Head of caudate nucleus (tissue), 42 donors: ENCODE measurements at regions of chr7 and their contacts with region 1.

Region 1: DNA sequence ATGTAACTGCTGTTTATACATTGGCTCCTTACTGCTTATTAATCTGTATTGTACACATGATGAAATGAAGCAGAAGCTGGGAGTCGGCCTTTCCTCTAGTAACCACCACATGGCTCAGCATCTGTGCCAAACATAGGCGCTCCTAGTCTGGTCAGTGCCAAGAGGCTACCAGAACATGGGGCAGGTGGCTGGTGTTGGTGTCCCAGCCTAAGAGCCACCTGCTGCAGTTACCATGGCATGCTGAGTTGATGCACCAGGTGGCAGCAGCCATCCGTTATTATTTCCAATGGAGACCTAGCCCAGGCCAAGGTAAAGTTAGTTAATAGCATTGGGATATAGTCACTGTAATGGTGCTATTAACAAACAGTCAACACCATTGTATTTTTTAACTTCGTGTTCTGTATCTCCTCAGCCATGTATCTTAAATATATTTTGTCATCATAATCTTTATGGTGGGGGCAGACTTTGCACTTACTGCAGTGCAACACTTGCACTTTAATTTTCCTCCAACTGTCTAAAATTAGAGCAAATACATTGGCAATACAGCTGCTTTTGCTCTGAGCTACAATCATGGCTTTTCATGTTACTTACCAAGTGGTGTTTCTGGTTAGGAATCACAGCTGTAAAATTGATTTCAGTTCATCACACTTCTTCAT is 33.1 kb downstream of the HBP1 start:
- DNase-seq: peak; percentile 17 to 78 (median 50)

Region 2: DNA sequence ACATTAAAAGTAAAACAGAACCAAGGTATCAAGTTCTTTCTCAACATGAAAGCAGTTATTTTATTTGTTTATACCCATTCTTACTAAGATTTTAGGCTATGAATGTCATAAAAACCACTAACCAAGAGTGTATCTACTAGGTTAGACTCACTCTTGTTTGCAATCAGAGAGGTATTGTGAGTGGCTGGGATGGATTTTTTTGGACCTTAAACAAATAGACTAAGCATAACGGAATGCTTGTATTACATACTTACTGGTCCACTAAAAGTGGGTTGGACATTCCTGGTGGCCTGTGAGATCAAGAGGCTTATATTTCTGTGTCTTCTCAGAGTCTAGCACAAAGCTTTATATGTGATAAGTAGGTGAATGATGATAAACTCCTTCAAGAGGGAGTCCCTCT is 509.4 kb after region 1 on chr7:
- intact Hi-C with region 1: loop called (anchors 10 kb)
- DNase-seq: no peak